ENCODE measurements at regions of chr3 and their contacts with region 1.

Region 1: GRCh38 chr3:79032686-79033318 is 735.0 kb downstream of the ROBO1 start:
- DNase-seq: no peak
- ATAC-seq: peak; percentile 51

Region 2: GRCh38 chr3:78660957-78661356 is 371.8 kb before region 1 on chr3:
- intact Hi-C with region 1: loop called in 1 of 2 experiments (anchors 5 kb)
- DNase-seq: no peak
- ATAC-seq: no peak

Measured in left colon (tissue), 2 donors.